ENCODE measurements at regions of chr20 and their contacts with region 1.

Region 1: GRCh38 chr20:32231847-32232246 is 24.2 kb downstream of the POFUT1 start:
- DNase-seq: peak; percentile 20
- H3K4me3 Mint-ChIP-seq: peak overlapping the region; percentile 69
- H3K27ac Mint-ChIP-seq: peak overlapping the region; percentile 97
- H3K4me1 Mint-ChIP-seq: peaks cover 38% of the 10 kb centered on the region
- H3K27me3 Mint-ChIP-seq: no peaks in the 10 kb centered on the region

Region 2: GRCh38 chr20:31835977-31836852 is 395.6 kb before region 1 on chr20:
- intact Hi-C with region 1: no loop called
- DNase-seq: peak; percentile 31
- H3K4me3 Mint-ChIP-seq: no peak overlapping the region
- H3K27ac Mint-ChIP-seq: no peak overlapping the region
- H3K4me1 Mint-ChIP-seq: peaks cover 7% of the 10 kb centered on the region
- H3K27me3 Mint-ChIP-seq: no peaks in the 10 kb centered on the region

Region 3: GRCh38 chr20:32271620-32272019 is 39.8 kb after region 1 on chr20:
- intact Hi-C with region 1: loop called (anchors 1 kb)
- DNase-seq: no peak
- H3K4me3 Mint-ChIP-seq: no peak overlapping the region
- H3K27ac Mint-ChIP-seq: no peak overlapping the region
- H3K4me1 Mint-ChIP-seq: peaks cover 4% of the 10 kb centered on the region
- H3K27me3 Mint-ChIP-seq: peaks cover 1% of the 10 kb centered on the region

Region 4: GRCh38 chr20:32285621-32286371 is 53.9 kb after region 1 on chr20:
- intact Hi-C with region 1: loop called (anchors 1 kb)
- DNase-seq: peak; percentile 47
- H3K4me3 Mint-ChIP-seq: peak overlapping the region; percentile 60
- H3K27ac Mint-ChIP-seq: peak overlapping the region; percentile 84
- H3K4me1 Mint-ChIP-seq: peaks cover 60% of the 10 kb centered on the region
- H3K27me3 Mint-ChIP-seq: no peaks in the 10 kb centered on the region

Measured in activated T-helper 2 cell treated with anti-CD3 and anti-CD28 coated beads, Interferon-gamma antibody, Interleukin-2, Interleukin-4, amounts not matched to agents 10 μg/mL and 5 μg/mL and 100 μg/mL, durations not matched to agents 14 hours and 24 hours and 36 hours (primary cell).